ENCODE measurements at regions of chrX and their contacts with region 1.

Region 1: GRCh38 chrX:42246814-42247213 is 323.5 kb upstream of the CASK start:
- DNase-seq: no peak
- ATAC-seq: no peak
- H3K4me3 ChIP-seq: no peak overlapping the region
- H3K27ac ChIP-seq: no peak overlapping the region
- H3K4me1 ChIP-seq: no peaks in the 10 kb centered on the region
- H3K27me3 ChIP-seq: no peaks in the 10 kb centered on the region
- CTCF ChIP-seq: no peak
- POLR2A ChIP-seq: no peak

Region 2: DNA sequence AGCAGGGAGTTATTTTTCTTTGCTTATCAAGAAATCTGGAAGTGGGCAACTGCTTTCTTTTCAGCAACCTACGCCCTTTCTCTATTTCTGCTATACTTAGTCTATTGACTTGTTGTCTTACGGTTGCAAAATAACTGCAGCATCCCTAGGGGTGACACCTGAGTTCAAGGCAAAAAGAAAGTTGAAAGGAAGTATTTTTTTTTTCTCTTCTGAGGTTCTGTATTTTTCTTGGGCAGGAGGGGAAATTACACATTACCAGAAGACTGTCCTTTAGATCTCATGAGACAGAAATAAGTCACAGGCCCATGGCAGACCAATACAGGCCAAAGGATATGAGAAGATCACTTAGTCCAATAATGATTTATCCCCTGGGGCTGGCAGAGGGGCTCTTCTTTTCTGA is 118.8 kb before region 1 on chrX:
- in situ Hi-C with region 1: loop called in 1 of 4 experiments (anchors 25 kb)
- intact Hi-C with region 1: no loop called
- DNase-seq: no peak
- ATAC-seq: no peak
- H3K4me3 ChIP-seq: no peak overlapping the region
- H3K27ac ChIP-seq: no peak overlapping the region
- H3K4me1 ChIP-seq: no peaks in the 10 kb centered on the region
- H3K27me3 ChIP-seq: no peaks in the 10 kb centered on the region
- CTCF ChIP-seq: no peak
- POLR2A ChIP-seq: no peak

Region 3: DNA sequence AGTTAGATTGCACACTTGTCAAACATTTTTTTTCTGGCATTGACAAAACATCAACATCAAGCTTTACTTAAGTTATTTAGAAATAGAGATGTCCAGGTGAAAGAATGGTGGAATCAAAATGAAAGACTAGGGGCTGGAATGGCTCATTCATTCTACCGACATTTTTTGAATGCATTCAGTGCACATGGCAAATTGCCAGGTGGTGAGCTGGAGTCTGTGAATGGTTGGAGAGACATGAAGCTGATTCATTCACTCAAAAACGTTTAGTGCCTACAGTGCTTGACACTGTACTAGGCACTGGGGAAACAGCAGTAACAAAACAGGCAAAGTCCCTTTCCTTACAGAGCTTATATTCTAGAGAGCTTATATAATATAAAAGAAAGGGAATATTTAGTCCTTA is 238.8 kb after region 1 on chrX:
- in situ Hi-C with region 1: no loop called
- intact Hi-C with region 1: no loop called
- DNase-seq: no peak
- ATAC-seq: no peak
- H3K4me3 ChIP-seq: no peak overlapping the region
- H3K27ac ChIP-seq: no peak overlapping the region
- H3K4me1 ChIP-seq: no peaks in the 10 kb centered on the region
- H3K27me3 ChIP-seq: no peaks in the 10 kb centered on the region
- CTCF ChIP-seq: no peak
- POLR2A ChIP-seq: no peak